ENCODE measurements at regions of chr20 and their contacts with region 1.

Region 1: DNA sequence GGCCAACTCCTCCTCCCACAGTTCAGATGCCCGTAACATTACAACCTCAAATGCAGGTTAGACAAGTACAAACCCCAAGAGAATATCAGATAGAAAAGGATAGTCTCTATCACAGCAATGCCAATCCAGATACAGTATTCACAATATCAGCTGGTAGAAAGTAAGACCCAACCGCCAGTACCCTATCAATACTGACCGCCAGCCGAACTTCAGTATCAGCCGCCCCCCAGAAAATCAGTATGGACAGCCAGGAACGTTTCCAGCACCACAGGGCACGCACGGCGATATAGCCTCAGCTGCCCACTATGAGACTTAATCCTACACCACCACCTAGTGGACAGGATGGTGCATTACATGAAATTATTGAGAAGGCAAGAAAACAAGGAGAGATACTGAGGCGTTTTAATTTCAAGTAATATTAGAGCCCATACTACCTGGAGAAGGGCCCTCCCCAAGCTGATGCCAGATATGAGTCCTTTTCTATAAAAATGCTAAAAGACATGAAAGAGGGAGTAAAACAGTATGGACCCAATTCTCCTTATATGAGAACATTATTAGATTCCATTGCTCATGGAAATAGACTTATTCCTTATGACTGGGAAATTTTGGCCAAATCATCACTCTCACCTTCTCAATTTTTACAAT is 17.6 kb upstream of the EIF2S2 start:
- DNase-seq: peak; percentile 32
- ATAC-seq: peak; percentile 95
- H3K4me3 Mint-ChIP-seq: peak overlapping the region; percentile 3
- H3K27ac Mint-ChIP-seq: no peak overlapping the region
- H3K4me1 Mint-ChIP-seq: peaks cover 5% of the 10 kb centered on the region
- H3K27me3 Mint-ChIP-seq: peaks cover 11% of the 10 kb centered on the region
- CTCF ChIP-seq: no peak

Region 2: GRCh38 chr20:33460711-33461110 is 668.9 kb before region 1 on chr20:
- CTCF ChIA-PET with region 1: no interaction called
- POLR2A ChIA-PET with region 1: no interaction called
- intact Hi-C with region 1: loop called (anchors 1 kb)
- DNase-seq: no peak
- ATAC-seq: no peak
- H3K4me3 Mint-ChIP-seq: no peak overlapping the region
- H3K27ac Mint-ChIP-seq: no peak overlapping the region
- H3K4me1 Mint-ChIP-seq: peaks cover 18% of the 10 kb centered on the region
- H3K27me3 Mint-ChIP-seq: no peaks in the 10 kb centered on the region
- CTCF ChIP-seq: no peak

Region 3: GRCh38 chr20:33862709-33863403 is 266.8 kb before region 1 on chr20:
- CTCF ChIA-PET with region 1: interaction called, 5 read pairs
- POLR2A ChIA-PET with region 1: no interaction called
- intact Hi-C with region 1: loop called (anchors 1 kb)
- DNase-seq: peak; percentile 54
- ATAC-seq: peak; percentile 60
- H3K4me3 Mint-ChIP-seq: no peak overlapping the region
- H3K27ac Mint-ChIP-seq: no peak overlapping the region
- H3K4me1 Mint-ChIP-seq: peaks cover 26% of the 10 kb centered on the region
- H3K27me3 Mint-ChIP-seq: no peaks in the 10 kb centered on the region
- CTCF ChIP-seq: no peak

Region 4: DNA sequence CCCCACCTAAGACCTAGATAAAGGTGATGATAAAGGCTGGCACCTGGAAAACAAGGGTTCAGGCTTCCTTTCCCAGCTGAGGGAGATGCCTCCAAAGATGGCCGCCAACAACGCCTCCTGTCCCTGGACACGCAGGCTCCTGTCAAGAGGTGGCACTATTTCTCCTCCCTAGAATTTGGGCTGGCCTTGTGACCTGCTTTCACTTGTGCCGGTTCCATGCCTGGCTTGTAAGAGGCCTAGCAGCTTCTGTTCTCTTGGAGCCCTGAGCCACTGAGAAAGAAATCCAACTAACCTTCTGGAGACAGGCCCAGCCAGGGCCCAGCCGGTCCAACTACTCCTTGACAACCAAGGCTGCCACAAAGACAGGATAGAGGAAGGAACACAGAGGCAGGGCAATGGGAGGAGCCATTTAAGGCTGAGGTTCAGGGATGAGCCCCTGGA is 196.2 kb before region 1 on chr20:
- CTCF ChIA-PET with region 1: no interaction called
- POLR2A ChIA-PET with region 1: no interaction called
- intact Hi-C with region 1: loop called (anchors 1 kb)
- DNase-seq: no peak
- ATAC-seq: peak; percentile 31
- H3K4me3 Mint-ChIP-seq: no peak overlapping the region
- H3K27ac Mint-ChIP-seq: no peak overlapping the region
- H3K4me1 Mint-ChIP-seq: no peaks in the 10 kb centered on the region
- H3K27me3 Mint-ChIP-seq: no peaks in the 10 kb centered on the region
- CTCF ChIP-seq: no peak

Region 5: GRCh38 chr20:34069341-34070078 is 60.1 kb before region 1 on chr20:
- CTCF ChIA-PET with region 1: interaction called, 26 read pairs
- POLR2A ChIA-PET with region 1: no interaction called
- intact Hi-C with region 1: loop called (anchors 1 kb)
- DNase-seq: no peak
- ATAC-seq: peak; percentile 89
- H3K4me3 Mint-ChIP-seq: no peak overlapping the region
- H3K27ac Mint-ChIP-seq: peak overlapping the region; percentile 61
- H3K4me1 Mint-ChIP-seq: peaks cover 24% of the 10 kb centered on the region
- H3K27me3 Mint-ChIP-seq: no peaks in the 10 kb centered on the region
- CTCF ChIP-seq: peak; percentile 36